K562 (cell line): ENCODE measurements at regions of chr6 and their contacts with region 1.

Region 1: GRCh38 chr6:100116411-100117194 is 122.6 kb upstream of the MCHR2 start:
- DNase-seq: peak; percentile 19 to 71 (median 24)
- ATAC-seq: peak; percentile 89
- H3K4me3 ChIP-seq: no peak overlapping the region
- H3K27ac ChIP-seq: no peak overlapping the region
- H3K4me1 ChIP-seq: no peaks in the 10 kb centered on the region
- H3K27me3 ChIP-seq: peaks cover 0 to 6% of the 10 kb centered on the region in 2 experiments; a peak in 1 of 5 replicates
- CTCF ChIP-seq: peak; percentile 59 to 87 (median 85)
- EP300 ChIP-seq: no peak
- POLR2A ChIP-seq: no peak
- RAD21 ChIP-seq: peak; percentile 85 to 88

Region 2: GRCh38 chr6:100126790-100127484 is 10.3 kb after region 1 on chr6:
- CTCF ChIA-PET with region 1: no interaction called
- POLR2A ChIA-PET with region 1: no interaction called
- in situ Hi-C with region 1: no loop called
- intact Hi-C with region 1: no loop called
- DNase-seq: no peak
- ATAC-seq: peak; percentile 29; the same call in 1 of the 3 replicates
- H3K4me3 ChIP-seq: no peak overlapping the region
- H3K27ac ChIP-seq: no peak overlapping the region; the same call in 2 of the 3 replicates
- H3K4me1 ChIP-seq: no peaks in the 10 kb centered on the region
- H3K27me3 ChIP-seq: no peaks in the 10 kb centered on the region
- CTCF ChIP-seq: peak in 2 of 3 experiments; percentile 14 to 38; a peak in 1 of 6 replicates
- EP300 ChIP-seq: no peak
- POLR2A ChIP-seq: no peak
- RAD21 ChIP-seq: peak; percentile 26 to 35; a peak in 1 of 4 replicates

Region 3: DNA sequence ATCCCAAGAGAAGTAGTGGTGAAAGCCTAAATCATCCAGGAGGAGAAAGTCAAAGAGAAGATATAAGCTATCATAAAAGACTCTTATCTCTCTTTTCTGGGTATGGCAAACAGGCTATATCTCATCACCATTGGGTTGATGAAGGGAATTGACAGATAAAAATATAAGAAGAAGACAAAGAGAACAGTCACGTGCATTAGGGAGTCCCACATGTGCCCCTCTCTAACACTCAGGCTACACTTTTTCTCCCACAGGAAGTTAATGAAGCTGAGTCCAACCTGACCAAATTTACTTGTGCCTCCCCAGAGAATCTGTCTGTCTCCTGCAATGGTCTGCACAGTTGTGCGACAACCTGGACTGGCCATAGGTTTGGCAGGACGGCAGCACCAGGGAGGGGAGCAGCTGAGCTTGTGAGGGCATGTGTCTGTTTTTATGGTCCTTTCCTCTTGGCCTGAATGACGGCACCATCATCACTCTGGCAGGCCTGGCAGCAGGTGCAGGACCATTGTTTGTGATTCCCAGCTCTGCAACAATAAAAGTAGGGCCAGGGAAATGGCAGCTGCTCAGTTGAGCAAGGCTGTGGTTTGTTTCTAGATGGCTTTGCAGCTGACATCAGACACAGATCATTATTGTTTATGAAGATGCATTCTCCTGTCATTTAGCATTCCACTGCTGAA is 21.9 kb after region 1 on chr6:
- CTCF ChIA-PET with region 1: no interaction called
- POLR2A ChIA-PET with region 1: no interaction called
- in situ Hi-C with region 1: no loop called
- intact Hi-C with region 1: no loop called
- DNase-seq: no peak
- ATAC-seq: no peak
- H3K4me3 ChIP-seq: no peak overlapping the region
- H3K27ac ChIP-seq: no peak overlapping the region
- H3K4me1 ChIP-seq: no peaks in the 10 kb centered on the region
- H3K27me3 ChIP-seq: peaks cover 4 to 15% of the 10 kb centered on the region in 2 experiments; a peak in 3 of 5 replicates
- CTCF ChIP-seq: no peak
- EP300 ChIP-seq: no peak
- POLR2A ChIP-seq: no peak
- RAD21 ChIP-seq: no peak

Region 4: DNA sequence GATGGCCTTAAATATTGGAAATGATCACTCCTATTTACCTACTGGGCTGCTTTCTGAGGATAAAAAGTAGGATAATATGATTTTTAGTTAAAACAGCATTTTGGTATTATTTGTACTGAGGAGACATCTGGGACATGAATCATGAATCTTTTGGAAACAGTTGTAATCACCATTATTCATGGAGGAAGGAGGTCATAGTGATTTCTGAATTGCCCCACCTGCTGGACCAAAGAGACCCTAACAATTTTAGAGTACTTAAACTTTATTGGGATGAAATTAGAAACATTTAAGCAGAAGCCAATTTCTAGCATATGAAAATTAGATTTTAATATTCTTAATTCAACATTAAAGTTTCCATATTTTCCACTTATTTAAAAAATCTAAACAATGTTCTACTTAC is 456.6 kb after region 1 on chr6:
- CTCF ChIA-PET with region 1: no interaction called
- POLR2A ChIA-PET with region 1: no interaction called
- in situ Hi-C with region 1: no loop called
- intact Hi-C with region 1: loop called (anchors 10 kb)
- DNase-seq: peak in 3 of 4 experiments; percentile 14 to 17 (median 16)
- ATAC-seq: peak; percentile 47; the same call in 1 of the 3 replicates
- H3K4me3 ChIP-seq: no peak overlapping the region
- H3K27ac ChIP-seq: no peak overlapping the region
- H3K4me1 ChIP-seq: no peaks in the 10 kb centered on the region
- H3K27me3 ChIP-seq: no peaks in the 10 kb centered on the region
- CTCF ChIP-seq: peak in 2 of 3 experiments; percentile 22 to 45; a peak in 2 of 6 replicates
- EP300 ChIP-seq: no peak
- POLR2A ChIP-seq: no peak
- RAD21 ChIP-seq: no peak

Region 5: GRCh38 chr6:100657678-100658330 is 541.2 kb after region 1 on chr6:
- CTCF ChIA-PET with region 1: interaction called, 35 read pairs
- POLR2A ChIA-PET with region 1: no interaction called
- in situ Hi-C with region 1: loop called (anchors 10 kb)
- intact Hi-C with region 1: loop called (anchors 2 kb)
- DNase-seq: peak in 1 of 4 experiments; percentile 6
- ATAC-seq: peak; percentile 59; the same call in 2 of the 3 replicates
- H3K4me3 ChIP-seq: no peak overlapping the region
- H3K27ac ChIP-seq: no peak overlapping the region
- H3K4me1 ChIP-seq: no peaks in the 10 kb centered on the region
- H3K27me3 ChIP-seq: no peaks in the 10 kb centered on the region
- CTCF ChIP-seq: peak; percentile 44 to 98 (median 95); a peak in 5 of 6 replicates
- EP300 ChIP-seq: no peak
- POLR2A ChIP-seq: no peak
- RAD21 ChIP-seq: peak; percentile 60 to 70

Region 6: DNA sequence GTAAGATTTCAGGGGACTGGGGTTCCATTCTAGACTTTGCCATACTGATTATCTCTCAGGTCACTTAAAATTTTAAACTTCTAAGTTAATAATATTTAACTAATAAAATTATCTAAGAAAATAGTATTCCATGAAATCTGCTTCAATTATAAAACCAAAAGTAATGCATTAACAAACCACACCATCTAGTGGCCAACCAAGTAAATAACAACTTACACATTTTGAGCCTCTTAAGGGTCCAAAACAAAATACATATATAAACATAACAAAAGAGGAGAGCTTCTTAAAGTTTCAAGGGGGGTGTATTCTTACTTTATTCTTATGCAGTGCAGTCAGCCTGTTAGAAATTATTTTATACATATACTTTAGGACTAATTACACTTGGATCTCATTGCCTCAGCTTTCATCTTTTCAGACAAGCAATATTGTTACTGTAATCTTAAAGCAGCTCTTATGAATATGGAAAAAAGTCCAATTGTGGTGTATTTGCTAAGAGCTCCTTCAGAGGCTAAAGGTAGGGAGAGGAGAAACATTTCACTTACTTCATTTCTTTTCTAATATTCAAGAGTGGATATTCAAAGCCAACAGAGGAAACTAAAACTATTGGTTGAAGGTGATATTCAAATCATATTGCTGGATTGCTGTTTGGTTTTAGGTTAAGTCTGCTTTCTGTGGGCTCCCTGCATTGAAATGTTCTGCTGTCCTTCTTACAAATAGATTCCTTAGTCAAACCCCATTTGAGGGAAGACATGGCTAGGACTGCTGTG is 547.9 kb after region 1 on chr6:
- CTCF ChIA-PET with region 1: interaction called, 4 read pairs
- POLR2A ChIA-PET with region 1: no interaction called
- in situ Hi-C with region 1: loop called (anchors 10 kb)
- intact Hi-C with region 1: loop called (anchors 2 kb)
- DNase-seq: peak; percentile 8 to 31 (median 20)
- ATAC-seq: peak; percentile 62
- H3K4me3 ChIP-seq: no peak overlapping the region
- H3K27ac ChIP-seq: no peak overlapping the region
- H3K4me1 ChIP-seq: no peaks in the 10 kb centered on the region
- H3K27me3 ChIP-seq: no peaks in the 10 kb centered on the region
- CTCF ChIP-seq: peak in 2 of 3 experiments; percentile 29 to 65; a peak in 3 of 6 replicates
- EP300 ChIP-seq: no peak
- POLR2A ChIP-seq: no peak
- RAD21 ChIP-seq: peak; percentile 41 to 50